Calu3 (cell line): ENCODE measurements at regions of chr18 and their contacts with region 1.

Region 1: GRCh38 chr18:38444971-38445803 is 879.6 kb upstream of the CELF4 start:
- DNase-seq: no peak
- H3K4me3 Mint-ChIP-seq: no peak overlapping the region
- H3K27ac Mint-ChIP-seq: no peak overlapping the region
- H3K4me1 Mint-ChIP-seq: no peaks in the 10 kb centered on the region
- H3K27me3 Mint-ChIP-seq: peaks cover 68% of the 10 kb centered on the region
- CTCF ChIP-seq: no peak

Region 2: DNA sequence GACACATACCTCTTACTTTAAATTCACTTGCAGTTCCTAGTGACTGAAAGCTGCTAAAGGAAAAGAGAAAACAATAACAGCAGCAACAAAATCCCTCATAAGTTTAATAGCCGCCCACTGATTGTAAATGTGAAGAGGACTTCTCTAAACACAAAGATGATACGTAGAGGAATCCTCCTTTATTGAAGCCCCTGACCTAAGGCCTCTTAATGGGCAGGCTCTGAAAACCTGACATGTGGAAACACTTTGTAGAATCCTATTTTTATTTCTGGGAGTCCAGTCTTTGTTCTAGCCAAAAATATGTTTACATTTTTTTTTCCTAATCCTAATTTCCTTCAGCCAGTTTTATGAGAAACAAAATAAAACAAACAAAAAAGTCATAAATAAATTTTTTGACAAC is 398.1 kb after region 1 on chr18:
- CTCF ChIA-PET with region 1: interaction called, 12 read pairs
- intact Hi-C with region 1: no loop called
- DNase-seq: no peak
- H3K4me3 Mint-ChIP-seq: no peak overlapping the region
- H3K27ac Mint-ChIP-seq: no peak overlapping the region
- H3K4me1 Mint-ChIP-seq: no peaks in the 10 kb centered on the region
- H3K27me3 Mint-ChIP-seq: no peaks in the 10 kb centered on the region
- CTCF ChIP-seq: no peak